GM12878 (cell line): ENCODE measurements at regions of chr3 and their contacts with region 1.

Region 1: GRCh38 chr3:50260027-50260941 is 8.7 kb upstream of the SEMA3B start:
- DNase-seq: no peak
- ATAC-seq: peak; percentile 98
- H3K4me3 ChIP-seq: peak overlapping the region; percentile 72; the same call in 1 of the 2 replicates
- H3K27ac ChIP-seq: no peak overlapping the region
- H3K4me1 ChIP-seq: peaks cover 14% of the 10 kb centered on the region
- H3K27me3 ChIP-seq: no peaks in the 10 kb centered on the region
- CTCF ChIP-seq: peak; percentile 91 to 98 (median 96)
- EP300 ChIP-seq: no peak
- POLR2A ChIP-seq: peak; percentile 75
- RAD21 ChIP-seq: peak; percentile 56; the same call in 1 of the 2 replicates

Region 2: DNA sequence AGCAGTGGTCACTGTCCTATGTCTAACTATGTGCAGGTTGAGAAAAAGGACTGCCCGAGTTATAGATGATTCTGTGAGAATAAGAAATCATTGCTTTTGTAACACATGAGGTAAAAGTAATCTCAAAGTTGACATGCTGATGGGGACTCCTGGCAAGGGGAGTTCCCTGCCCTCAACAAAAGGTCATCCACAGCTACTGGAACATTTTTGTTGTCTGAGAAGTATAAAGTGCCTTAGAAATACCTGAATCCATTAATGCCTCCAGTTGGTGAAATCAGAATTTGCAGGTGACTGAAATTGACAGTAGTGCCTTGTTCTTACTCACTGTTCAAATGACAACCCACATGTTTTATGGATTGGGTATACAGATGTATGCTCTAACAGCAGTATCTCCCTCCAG is 215.3 kb before region 1 on chr3:
- CTCF ChIA-PET with region 1: no interaction called
- POLR2A ChIA-PET with region 1: interaction called, 12 read pairs
- RAD21 ChIA-PET with region 1: no interaction called
- SMC1A ChIA-PET with region 1: no interaction called
- in situ Hi-C with region 1: no loop called
- intact Hi-C with region 1: no loop called
- DNase-seq: no peak
- ATAC-seq: no peak
- H3K4me3 ChIP-seq: no peak overlapping the region
- H3K27ac ChIP-seq: no peak overlapping the region
- H3K4me1 ChIP-seq: no peaks in the 10 kb centered on the region
- H3K27me3 ChIP-seq: no peaks in the 10 kb centered on the region
- CTCF ChIP-seq: no peak
- EP300 ChIP-seq: no peak
- POLR2A ChIP-seq: no peak
- RAD21 ChIP-seq: no peak

Region 3: DNA sequence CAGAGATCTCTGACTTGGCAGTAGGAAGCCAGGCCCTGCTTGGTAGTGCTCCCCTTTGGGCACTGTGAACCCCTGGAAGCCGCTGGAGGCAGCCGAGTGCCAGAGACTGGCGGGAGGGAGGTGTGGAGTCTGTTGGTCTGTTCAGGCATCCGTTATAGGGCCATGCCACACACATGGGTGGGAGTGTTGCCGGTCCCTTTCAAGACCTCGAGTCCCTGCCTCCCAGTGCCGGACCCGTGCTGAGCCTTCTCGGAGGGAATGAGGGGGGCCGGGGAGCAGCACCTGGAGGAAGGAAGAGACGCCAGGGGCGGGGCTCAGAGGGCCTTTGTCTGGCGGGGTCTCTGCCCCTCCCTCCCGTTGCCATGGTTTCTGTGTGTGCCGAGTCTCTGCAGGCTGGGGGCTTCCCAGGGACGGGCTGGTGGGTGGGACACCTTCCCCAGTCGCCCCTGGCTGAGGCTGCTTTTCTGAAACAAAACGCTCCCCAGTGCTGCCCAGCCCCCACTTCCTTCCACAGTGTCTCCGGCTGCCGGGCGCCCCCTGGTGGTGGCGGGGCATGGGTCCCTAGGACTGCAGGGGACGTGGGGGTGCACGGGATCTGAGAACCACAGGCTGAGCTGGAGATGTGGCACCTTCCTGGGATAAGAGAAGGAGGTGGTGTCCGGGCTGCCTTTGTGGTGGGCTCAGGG is 14.3 kb before region 1 on chr3:
- CTCF ChIA-PET with region 1: interaction called, 43 read pairs
- POLR2A ChIA-PET with region 1: interaction called, 5 read pairs
- RAD21 ChIA-PET with region 1: interaction called, 10 read pairs
- SMC1A ChIA-PET with region 1: interaction called, 10 read pairs
- in situ Hi-C with region 1: no loop called
- intact Hi-C with region 1: no loop called
- DNase-seq: no peak
- ATAC-seq: peak; percentile 90
- H3K4me3 ChIP-seq: peak overlapping the region; percentile 70
- H3K27ac ChIP-seq: peak overlapping the region; percentile 71
- H3K4me1 ChIP-seq: peaks cover 52% of the 10 kb centered on the region
- H3K27me3 ChIP-seq: no peaks in the 10 kb centered on the region
- CTCF ChIP-seq: peak; percentile 96 to 99 (median 98)
- EP300 ChIP-seq: peak in 1 of 2 experiments; percentile 42; a peak in 1 of 4 replicates
- POLR2A ChIP-seq: peak; percentile 57
- RAD21 ChIP-seq: peak; percentile 89

Region 4: GRCh38 chr3:50272911-50273693 is 12.8 kb after region 1 on chr3:
- CTCF ChIA-PET with region 1: interaction called, 12 read pairs
- POLR2A ChIA-PET with region 1: interaction called, 3 read pairs
- RAD21 ChIA-PET with region 1: interaction called, 3 read pairs
- SMC1A ChIA-PET with region 1: interaction called, 5 read pairs
- in situ Hi-C with region 1: no loop called
- intact Hi-C with region 1: no loop called
- DNase-seq: peak; percentile 44
- ATAC-seq: peak; percentile 95
- H3K4me3 ChIP-seq: no peak overlapping the region
- H3K27ac ChIP-seq: no peak overlapping the region
- H3K4me1 ChIP-seq: peaks cover 6% of the 10 kb centered on the region
- H3K27me3 ChIP-seq: peaks cover 7 to 8% of the 10 kb centered on the region in 2 experiments; a peak in 3 of 4 replicates
- CTCF ChIP-seq: peak; percentile 98 to 99 (median 98); a peak in 5 of 6 replicates
- EP300 ChIP-seq: no peak
- POLR2A ChIP-seq: no peak
- RAD21 ChIP-seq: peak; percentile 93

Region 5: GRCh38 chr3:50298836-50299637 is 38.8 kb after region 1 on chr3 and contains the starts of genes HYAL3 and NAA80:
- CTCF ChIA-PET with region 1: interaction called, 10 read pairs
- POLR2A ChIA-PET with region 1: interaction called, 4 read pairs
- RAD21 ChIA-PET with region 1: no interaction called
- SMC1A ChIA-PET with region 1: no interaction called
- in situ Hi-C with region 1: no loop called
- intact Hi-C with region 1: no loop called
- DNase-seq: peak; percentile 98
- ATAC-seq: peak; percentile 90
- H3K4me3 ChIP-seq: peak within 1 kb of the TSS; percentile 82
- H3K27ac ChIP-seq: peak within 1 kb of the TSS; percentile 83
- H3K4me1 ChIP-seq: peaks cover 4% of the 10 kb centered on the region
- H3K27me3 ChIP-seq: no peaks in the 10 kb centered on the region
- CTCF ChIP-seq: peak; percentile 24 to 56 (median 50); a peak in 4 of 6 replicates
- EP300 ChIP-seq: no peak
- POLR2A ChIP-seq: peak; percentile 99
- RAD21 ChIP-seq: no peak
- polyA plus RNA-seq, gene HYAL3: 0.37 TPM
- polyA plus RNA-seq, gene NAA80: 0.48 to 0.62 TPM

Region 6: DNA sequence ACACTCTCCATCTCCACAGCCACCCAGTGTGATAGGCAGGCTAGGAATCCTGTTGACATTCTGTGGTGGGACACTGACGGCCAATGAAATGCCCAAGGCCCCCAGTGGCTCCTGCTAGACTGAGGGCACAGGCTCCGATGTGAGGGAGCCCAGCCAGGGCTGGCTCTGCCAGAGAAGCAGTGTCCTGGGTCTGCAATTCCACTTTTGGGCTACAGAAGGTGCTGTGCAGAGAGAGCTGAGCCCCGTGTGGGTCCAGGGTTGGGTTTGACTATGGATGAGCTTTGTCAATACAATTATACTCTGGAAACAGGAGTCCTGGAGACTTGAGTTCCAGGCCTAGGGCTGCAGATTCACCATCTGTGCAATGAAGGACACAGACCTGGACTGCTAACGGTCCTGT is 154.8 kb after region 1 on chr3:
- CTCF ChIA-PET with region 1: no interaction called
- POLR2A ChIA-PET with region 1: no interaction called
- RAD21 ChIA-PET with region 1: no interaction called
- SMC1A ChIA-PET with region 1: no interaction called
- in situ Hi-C with region 1: no loop called
- intact Hi-C with region 1: no loop called
- DNase-seq: no peak
- ATAC-seq: no peak
- H3K4me3 ChIP-seq: no peak overlapping the region
- H3K27ac ChIP-seq: no peak overlapping the region
- H3K4me1 ChIP-seq: no peaks in the 10 kb centered on the region
- H3K27me3 ChIP-seq: peaks cover 0 to 1% of the 10 kb centered on the region in 2 experiments; a peak in 3 of 4 replicates
- CTCF ChIP-seq: peak in 2 of 3 experiments; percentile 10 to 28; a peak in 1 of 6 replicates
- EP300 ChIP-seq: no peak
- POLR2A ChIP-seq: no peak
- RAD21 ChIP-seq: no peak